Esophagus muscularis mucosa (tissue), 4 donors: ENCODE measurements at regions of chr1 and their contacts with region 1.

Region 1: DNA sequence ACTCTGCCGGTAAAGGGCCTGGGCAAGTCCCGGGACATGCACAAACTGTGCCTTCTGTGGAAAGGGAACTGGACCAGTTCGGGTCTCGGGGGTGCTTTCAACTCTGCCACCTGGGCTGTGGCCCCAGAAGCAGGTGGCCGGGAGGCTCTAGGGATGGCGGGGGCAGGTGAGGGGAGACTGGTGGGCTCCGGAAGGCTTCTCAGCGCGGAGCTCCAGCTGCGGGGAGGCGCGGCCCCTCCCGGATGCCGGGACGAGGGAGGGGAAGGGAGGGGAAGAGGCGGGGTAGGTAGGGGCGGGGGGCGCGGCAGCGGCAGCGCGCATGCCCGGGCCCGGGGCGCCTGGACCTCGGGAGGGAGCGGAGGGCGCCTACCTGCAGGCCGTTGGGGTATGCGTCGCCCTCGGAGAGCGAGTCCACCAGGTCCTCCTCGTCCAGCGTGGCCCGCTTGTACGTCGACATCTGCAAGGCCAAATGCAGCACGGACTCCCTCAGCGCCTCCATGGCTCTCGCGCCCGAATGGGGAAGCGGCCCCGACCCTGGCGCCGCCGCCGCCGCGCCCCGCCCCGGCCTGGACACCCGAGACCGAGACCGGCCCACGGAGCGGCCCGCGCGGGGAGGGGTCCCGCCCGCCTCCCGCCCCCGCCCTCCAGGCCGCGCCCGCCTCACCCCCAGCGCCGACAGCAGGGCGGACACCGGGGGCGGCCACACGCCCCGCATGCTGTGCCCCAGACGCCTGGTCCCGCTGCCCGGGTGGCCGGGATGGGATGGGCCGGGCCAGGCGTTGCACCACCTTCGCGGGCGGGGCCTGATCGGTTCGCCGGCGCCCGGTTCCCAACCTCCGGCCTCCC is at the start of gene ECE1:
- DNase-seq: no peak
- H3K4me3 ChIP-seq: peak within 1 kb of the TSS; percentile 64 to 72 (median 68)
- H3K27ac ChIP-seq: peak within 1 kb of the TSS; percentile 66 to 71 (median 68)
- H3K4me1 ChIP-seq: peaks cover 29 to 61% (median 55%) of the 10 kb centered on the region in 4 donors
- H3K27me3 ChIP-seq: no peaks in the 10 kb centered on the region
- CTCF ChIP-seq: no peak
- EP300 ChIP-seq: no peak
- POLR2A ChIP-seq: no peak
- total RNA-seq, gene ECE1: 53.6 to 101 (median 80.7) TPM

Region 2: DNA sequence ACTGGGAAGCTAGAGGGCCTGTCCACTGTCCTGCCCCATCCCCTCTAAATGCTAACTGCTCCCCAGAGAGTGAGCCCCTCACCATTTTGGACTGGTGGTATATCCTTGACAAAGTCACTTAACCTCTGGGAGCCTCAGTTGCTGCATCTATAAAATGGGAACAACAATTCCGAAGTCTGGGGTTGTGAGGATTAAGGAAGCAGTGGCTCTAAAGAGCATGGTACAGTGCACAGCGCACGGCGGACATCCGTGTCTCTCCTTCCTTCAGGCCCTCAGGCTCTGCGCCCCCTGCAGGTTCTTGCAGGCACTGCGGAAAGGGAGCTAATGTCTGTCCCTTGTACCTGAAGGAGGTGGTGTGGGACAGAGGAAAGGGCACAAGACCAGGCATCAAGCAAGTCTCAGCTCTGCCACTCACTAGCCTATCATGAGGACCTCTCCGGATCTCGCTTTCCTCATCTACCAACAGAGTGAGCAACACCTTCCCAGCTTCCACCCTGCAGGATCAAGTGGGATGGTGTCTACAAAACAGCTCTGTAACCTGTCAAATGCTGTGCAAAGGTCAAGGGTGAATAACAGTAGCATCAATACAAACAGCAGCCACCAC is 19.7 kb before region 1 on chr1:
- intact Hi-C with region 1: loop called (anchors 2 kb)
- DNase-seq: no peak
- H3K4me3 ChIP-seq: no peak overlapping the region
- H3K27ac ChIP-seq: no peak overlapping the region
- H3K4me1 ChIP-seq: peaks cover 38 to 52% (median 47%) of the 10 kb centered on the region in 4 donors
- H3K27me3 ChIP-seq: no peaks in the 10 kb centered on the region
- CTCF ChIP-seq: peak; percentile 78 to 96 (median 84)
- EP300 ChIP-seq: no peak
- POLR2A ChIP-seq: no peak

Region 3: GRCh38 chr1:21334214-21335087 is 44.5 kb after region 1 on chr1:
- intact Hi-C with region 1: loop called (anchors 5 kb)
- DNase-seq: no peak
- H3K4me3 ChIP-seq: peak overlapping the region; percentile 20 to 51 (median 32)
- H3K27ac ChIP-seq: peak overlapping the region; percentile 54 to 76 (median 73)
- H3K4me1 ChIP-seq: peaks cover 84 to 97% (median 93%) of the 10 kb centered on the region in 4 donors
- H3K27me3 ChIP-seq: no peaks in the 10 kb centered on the region
- CTCF ChIP-seq: peak; percentile 61 to 82 (median 74)
- EP300 ChIP-seq: no peak
- POLR2A ChIP-seq: peak; percentile 1

Region 4: DNA sequence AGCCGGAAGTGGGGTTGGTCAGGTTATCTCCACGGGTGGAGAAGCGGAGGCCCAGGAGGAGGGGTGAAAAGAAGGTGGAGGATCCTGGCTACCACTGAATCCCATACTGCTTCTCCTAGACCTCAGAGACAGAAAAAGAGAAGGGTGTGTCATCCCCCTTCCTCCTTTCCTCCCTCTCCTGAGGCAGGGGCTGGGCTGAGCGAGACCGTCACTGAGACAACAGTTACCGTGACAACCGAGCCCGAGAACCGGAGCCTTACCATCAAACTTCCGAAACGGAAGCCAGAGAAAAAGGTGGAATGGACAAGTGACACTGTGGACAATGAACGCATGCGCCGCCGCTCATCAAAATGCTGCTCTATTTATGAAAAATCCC is 107.9 kb after region 1 on chr1:
- intact Hi-C with region 1: no loop called
- DNase-seq: no peak
- H3K4me3 ChIP-seq: no peak overlapping the region
- H3K27ac ChIP-seq: no peak overlapping the region
- H3K4me1 ChIP-seq: no peaks in the 10 kb centered on the region
- H3K27me3 ChIP-seq: peaks cover 0 to 39% (median 0%) of the 10 kb centered on the region in 4 donors
- CTCF ChIP-seq: no peak
- EP300 ChIP-seq: no peak
- POLR2A ChIP-seq: no peak

Region 5: GRCh38 chr1:21707086-21707840 is 417.3 kb after region 1 on chr1:
- intact Hi-C with region 1: no loop called
- DNase-seq: no peak
- H3K4me3 ChIP-seq: no peak overlapping the region
- H3K27ac ChIP-seq: no peak overlapping the region
- H3K4me1 ChIP-seq: peaks cover 3 to 13% (median 9%) of the 10 kb centered on the region in 4 donors
- H3K27me3 ChIP-seq: no peaks in the 10 kb centered on the region
- CTCF ChIP-seq: no peak
- EP300 ChIP-seq: no peak
- POLR2A ChIP-seq: no peak